AG04449 (cell line): ENCODE measurements at regions of chr2 and their contacts with region 1.

Region 1: DNA sequence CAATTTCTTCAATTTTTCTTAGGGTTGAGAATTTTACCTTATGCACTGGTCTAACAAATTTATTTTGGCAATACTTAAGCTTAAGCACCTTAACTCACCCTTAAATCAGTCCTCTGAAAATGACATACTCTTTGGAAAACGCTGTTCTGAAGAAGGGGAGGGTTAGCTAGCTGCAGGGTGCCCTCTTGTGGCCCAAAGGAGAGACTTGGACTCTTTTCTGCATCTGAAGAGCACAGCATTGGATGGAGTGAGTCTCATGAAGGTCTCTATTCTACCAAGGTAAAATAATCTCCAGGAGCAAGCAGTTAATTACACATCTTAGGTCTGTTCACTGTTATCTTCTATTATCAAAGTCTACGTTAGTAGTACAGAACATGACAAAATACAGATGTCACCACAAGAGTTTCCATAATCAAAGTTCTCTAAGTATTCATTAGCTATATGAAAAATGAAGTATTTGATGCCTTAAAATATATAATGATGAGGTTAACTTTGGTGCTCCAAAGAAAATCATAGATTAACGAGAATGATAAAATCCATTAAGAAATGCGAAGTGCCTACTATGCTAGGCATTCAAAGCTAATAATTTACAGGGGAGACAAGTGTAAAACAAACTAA is 24.4 kb downstream of the PUM2 start:
- DNase-seq: no peak
- H3K4me3 ChIP-seq: no peak overlapping the region
- CTCF ChIP-seq: peak; percentile 88

Region 2: GRCh38 chr2:20135631-20136050 is 190.6 kb before region 1 on chr2:
- CTCF ChIA-PET with region 1: interaction called, 29 read pairs
- POLR2A ChIA-PET with region 1: no interaction called
- DNase-seq: no peak
- H3K4me3 ChIP-seq: no peak overlapping the region
- CTCF ChIP-seq: peak; percentile 92

Region 3: GRCh38 chr2:20299113-20299512 is 27.2 kb before region 1 on chr2:
- CTCF ChIA-PET with region 1: interaction called, 49 read pairs
- POLR2A ChIA-PET with region 1: no interaction called
- DNase-seq: no peak
- H3K4me3 ChIP-seq: no peak overlapping the region
- CTCF ChIP-seq: no peak

Region 4: GRCh38 chr2:20304411-20304810 is 21.9 kb before region 1 on chr2:
- CTCF ChIA-PET with region 1: interaction called, 38 read pairs
- POLR2A ChIA-PET with region 1: no interaction called
- DNase-seq: peak; percentile 42
- H3K4me3 ChIP-seq: no peak overlapping the region
- CTCF ChIP-seq: no peak

Region 5: GRCh38 chr2:20313659-20314058 is 12.6 kb before region 1 on chr2:
- CTCF ChIA-PET with region 1: interaction called, 76 read pairs
- POLR2A ChIA-PET with region 1: no interaction called
- DNase-seq: no peak
- H3K4me3 ChIP-seq: no peak overlapping the region
- CTCF ChIP-seq: no peak

Region 6: GRCh38 chr2:20343128-20343527 is 16.9 kb after region 1 on chr2:
- CTCF ChIA-PET with region 1: interaction called, 168 read pairs
- POLR2A ChIA-PET with region 1: no interaction called
- DNase-seq: no peak
- H3K4me3 ChIP-seq: no peak overlapping the region
- CTCF ChIP-seq: no peak

Region 7: GRCh38 chr2:20350753-20351554 is 24.7 kb after region 1 on chr2 and contains the start of gene PUM2:
- CTCF ChIA-PET with region 1: interaction called, 27 read pairs
- POLR2A ChIA-PET with region 1: no interaction called
- DNase-seq: peak; percentile 33
- H3K4me3 ChIP-seq: peak within 1 kb of the TSS; percentile 81
- CTCF ChIP-seq: no peak